GM12878 (cell line): ENCODE measurements at regions of chr6 and their contacts with region 1.

Region 1: GRCh38 chr6:130697995-130698535 is 129.1 kb upstream of the SMLR1 start:
- DNase-seq: peak; percentile 28
- ATAC-seq: peak; percentile 99
- H3K4me3 ChIP-seq: no peak overlapping the region
- H3K27ac ChIP-seq: no peak overlapping the region
- H3K4me1 ChIP-seq: no peaks in the 10 kb centered on the region
- H3K27me3 ChIP-seq: no peaks in the 10 kb centered on the region
- CTCF ChIP-seq: peak; percentile 71 to 81 (median 80)
- EP300 ChIP-seq: no peak
- POLR2A ChIP-seq: no peak
- RAD21 ChIP-seq: peak; percentile 95

Region 2: GRCh38 chr6:130313206-130313605 is 384.9 kb before region 1 on chr6:
- CTCF ChIA-PET with region 1: interaction called, 8 read pairs
- POLR2A ChIA-PET with region 1: no interaction called
- RAD21 ChIA-PET with region 1: interaction called, 29 read pairs
- SMC1A ChIA-PET with region 1: interaction called, 24 read pairs
- in situ Hi-C with region 1: no loop called
- intact Hi-C with region 1: no loop called
- DNase-seq: no peak
- ATAC-seq: no peak
- H3K4me3 ChIP-seq: no peak overlapping the region
- H3K27ac ChIP-seq: no peak overlapping the region
- H3K4me1 ChIP-seq: no peaks in the 10 kb centered on the region; the same call in 1 of the 2 replicates
- H3K27me3 ChIP-seq: no peaks in the 10 kb centered on the region
- CTCF ChIP-seq: no peak; a peak in 1 of 6 replicates
- EP300 ChIP-seq: no peak
- POLR2A ChIP-seq: no peak
- RAD21 ChIP-seq: no peak

Region 3: DNA sequence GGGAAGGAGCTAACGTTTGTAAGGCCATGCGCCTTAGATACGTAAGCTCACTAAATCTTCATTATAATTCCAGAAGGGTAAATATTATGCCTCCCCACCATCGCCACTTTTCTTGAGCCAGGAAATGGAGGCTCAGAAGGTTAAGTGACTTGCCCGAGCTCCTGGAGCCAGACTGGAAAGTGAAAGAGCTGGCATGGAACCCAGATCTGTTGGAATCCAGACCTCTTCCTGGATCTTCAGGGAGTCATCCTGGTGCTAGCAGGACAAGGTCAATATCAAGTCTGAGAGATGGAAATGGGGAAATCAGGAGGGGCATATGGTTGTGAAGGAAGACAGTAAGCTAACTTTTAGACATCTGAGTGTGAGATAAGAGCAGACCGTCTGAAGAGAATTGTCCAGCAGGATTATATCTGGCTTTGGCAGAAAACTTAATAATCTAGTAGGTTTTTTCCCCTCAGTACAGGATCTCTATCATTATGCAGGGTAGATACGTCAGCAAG is 326.1 kb before region 1 on chr6:
- CTCF ChIA-PET with region 1: interaction called, 26 read pairs
- POLR2A ChIA-PET with region 1: interaction called, 3 read pairs
- RAD21 ChIA-PET with region 1: interaction called, 57 read pairs
- SMC1A ChIA-PET with region 1: interaction called, 16 read pairs
- in situ Hi-C with region 1: no loop called
- intact Hi-C with region 1: no loop called
- DNase-seq: no peak
- ATAC-seq: no peak
- H3K4me3 ChIP-seq: no peak overlapping the region
- H3K27ac ChIP-seq: no peak overlapping the region
- H3K4me1 ChIP-seq: no peaks in the 10 kb centered on the region
- H3K27me3 ChIP-seq: peaks cover 0 to 2% of the 10 kb centered on the region in 2 experiments; a peak in 1 of 4 replicates
- CTCF ChIP-seq: no peak
- EP300 ChIP-seq: no peak
- POLR2A ChIP-seq: no peak
- RAD21 ChIP-seq: no peak

Region 4: GRCh38 chr6:130560231-130560630 is 137.8 kb before region 1 on chr6:
- CTCF ChIA-PET with region 1: interaction called, 4 read pairs
- POLR2A ChIA-PET with region 1: no interaction called
- RAD21 ChIA-PET with region 1: interaction called, 7 read pairs
- SMC1A ChIA-PET with region 1: interaction called, 20 read pairs
- in situ Hi-C with region 1: no loop called
- intact Hi-C with region 1: no loop called
- DNase-seq: no peak
- ATAC-seq: peak; percentile 71
- H3K4me3 ChIP-seq: no peak overlapping the region
- H3K27ac ChIP-seq: no peak overlapping the region
- H3K4me1 ChIP-seq: no peaks in the 10 kb centered on the region
- H3K27me3 ChIP-seq: no peaks in the 10 kb centered on the region
- CTCF ChIP-seq: no peak
- EP300 ChIP-seq: no peak
- POLR2A ChIP-seq: no peak
- RAD21 ChIP-seq: no peak

Region 5: GRCh38 chr6:130625825-130626527 is 72.1 kb before region 1 on chr6:
- CTCF ChIA-PET with region 1: interaction called, 8 read pairs
- POLR2A ChIA-PET with region 1: no interaction called
- RAD21 ChIA-PET with region 1: interaction called, 6 read pairs
- SMC1A ChIA-PET with region 1: interaction called, 10 read pairs
- in situ Hi-C with region 1: no loop called
- intact Hi-C with region 1: loop called (anchors 5 kb)
- DNase-seq: peak; percentile 53
- ATAC-seq: peak; percentile 90
- H3K4me3 ChIP-seq: no peak overlapping the region
- H3K27ac ChIP-seq: no peak overlapping the region; the same call in 1 of the 2 replicates
- H3K4me1 ChIP-seq: peaks cover 6% of the 10 kb centered on the region; the same call in 1 of the 2 replicates
- H3K27me3 ChIP-seq: no peaks in the 10 kb centered on the region
- CTCF ChIP-seq: no peak
- EP300 ChIP-seq: peak; percentile 72 to 83; a peak in 3 of 4 replicates
- POLR2A ChIP-seq: no peak
- RAD21 ChIP-seq: peak; percentile 13; the same call in 1 of the 2 replicates

Region 6: DNA sequence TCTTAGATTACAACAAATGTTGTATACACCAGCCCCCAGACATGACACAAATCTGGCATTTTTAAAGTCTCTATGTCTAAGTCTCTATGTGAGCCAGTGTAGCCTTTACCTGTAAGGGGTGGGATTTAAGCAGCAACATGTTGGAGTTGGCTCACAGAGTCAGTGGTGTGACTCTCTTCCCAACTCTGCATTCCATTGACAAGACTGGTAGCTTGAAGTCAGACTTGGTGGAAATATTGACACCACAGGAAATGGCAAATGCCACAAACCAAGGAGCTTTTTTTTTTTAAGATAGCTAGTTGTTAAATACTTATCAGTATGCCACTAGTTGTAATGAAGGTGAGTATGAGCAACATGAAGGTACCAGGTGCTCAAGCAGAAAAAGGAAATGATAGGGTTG is 26.0 kb after region 1 on chr6:
- CTCF ChIA-PET with region 1: interaction called, 10 read pairs
- POLR2A ChIA-PET with region 1: no interaction called
- RAD21 ChIA-PET with region 1: interaction called, 4 read pairs
- SMC1A ChIA-PET with region 1: interaction called, 5 read pairs
- in situ Hi-C with region 1: no loop called
- intact Hi-C with region 1: no loop called
- DNase-seq: no peak
- ATAC-seq: no peak
- H3K4me3 ChIP-seq: no peak overlapping the region
- H3K27ac ChIP-seq: no peak overlapping the region
- H3K4me1 ChIP-seq: no peaks in the 10 kb centered on the region
- H3K27me3 ChIP-seq: no peaks in the 10 kb centered on the region
- CTCF ChIP-seq: no peak
- EP300 ChIP-seq: no peak
- POLR2A ChIP-seq: no peak
- RAD21 ChIP-seq: no peak

Region 7: GRCh38 chr6:130783416-130784107 is 85.5 kb after region 1 on chr6:
- CTCF ChIA-PET with region 1: no interaction called
- POLR2A ChIA-PET with region 1: no interaction called
- RAD21 ChIA-PET with region 1: no interaction called
- SMC1A ChIA-PET with region 1: no interaction called
- in situ Hi-C with region 1: no loop called
- intact Hi-C with region 1: no loop called
- DNase-seq: no peak
- ATAC-seq: no peak
- H3K4me3 ChIP-seq: no peak overlapping the region
- H3K27ac ChIP-seq: no peak overlapping the region
- H3K4me1 ChIP-seq: no peaks in the 10 kb centered on the region
- H3K27me3 ChIP-seq: no peaks in the 10 kb centered on the region
- CTCF ChIP-seq: no peak
- EP300 ChIP-seq: no peak
- POLR2A ChIP-seq: no peak
- RAD21 ChIP-seq: no peak

Region 8: GRCh38 chr6:130872250-130873095 is 174.4 kb after region 1 on chr6:
- CTCF ChIA-PET with region 1: interaction called, 15 read pairs
- POLR2A ChIA-PET with region 1: no interaction called
- RAD21 ChIA-PET with region 1: interaction called, 5 read pairs
- SMC1A ChIA-PET with region 1: interaction called, 4 read pairs
- in situ Hi-C with region 1: no loop called
- intact Hi-C with region 1: no loop called
- DNase-seq: no peak
- ATAC-seq: peak; percentile 93
- H3K4me3 ChIP-seq: no peak overlapping the region
- H3K27ac ChIP-seq: no peak overlapping the region
- H3K4me1 ChIP-seq: no peaks in the 10 kb centered on the region
- H3K27me3 ChIP-seq: no peaks in the 10 kb centered on the region
- CTCF ChIP-seq: peak; percentile 81 to 92 (median 90)
- EP300 ChIP-seq: no peak
- POLR2A ChIP-seq: no peak
- RAD21 ChIP-seq: peak; percentile 66